Right ventricle myocardium superior (tissue), 1 donor: ENCODE measurements at regions of chr3 and their contacts with region 1.

Region 1: DNA sequence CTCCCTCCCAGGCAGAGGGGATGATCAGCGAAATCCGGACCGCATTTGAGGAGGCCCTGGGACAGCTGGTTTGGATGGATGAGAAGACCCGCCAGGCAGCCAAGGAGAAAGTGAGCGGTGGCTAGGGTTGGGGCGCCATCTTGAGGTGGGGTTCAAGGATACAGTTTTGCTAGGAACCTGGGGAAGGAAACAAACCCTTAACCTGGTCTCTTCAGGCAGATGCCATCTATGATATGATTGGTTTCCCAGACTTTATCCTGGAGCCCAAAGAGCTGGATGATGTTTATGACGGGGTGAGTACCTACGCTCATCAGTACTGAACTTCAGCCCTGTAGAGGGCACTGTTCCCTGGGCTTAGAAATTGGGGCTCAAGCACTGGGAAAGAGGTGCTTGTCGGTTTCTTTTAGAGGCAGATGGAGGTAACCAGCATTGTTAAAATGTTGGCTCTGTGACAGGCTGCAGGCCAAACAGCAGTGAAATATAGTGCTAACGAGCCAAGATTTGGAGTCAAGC is 9.6 kb upstream of the PSMD2 start:
- DNase-seq: no peak
- ATAC-seq: peak; percentile 55

Region 2: DNA sequence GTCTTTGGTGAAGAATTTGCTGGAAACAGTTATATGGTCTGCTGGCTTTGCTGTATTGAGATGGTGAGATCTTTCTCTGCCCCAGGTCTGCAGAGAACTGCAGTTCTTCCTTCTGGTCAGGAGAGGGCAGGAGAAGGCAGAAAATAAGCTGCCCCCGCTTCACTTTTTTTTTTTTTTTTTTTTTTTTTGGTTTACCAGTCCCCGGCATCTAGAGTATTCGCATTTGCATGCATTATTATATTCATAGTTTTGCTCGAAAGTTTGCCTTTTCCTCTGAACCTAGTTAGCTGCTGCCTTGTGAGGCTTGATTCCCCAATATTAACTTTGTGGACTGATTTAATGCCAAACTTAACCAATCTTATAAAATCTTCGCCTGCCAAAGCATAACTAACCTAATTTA is 394.2 kb before region 1 on chr3:
- intact Hi-C with region 1: loop called (anchors 10 kb)
- DNase-seq: no peak
- ATAC-seq: peak; percentile 72

Region 3: DNA sequence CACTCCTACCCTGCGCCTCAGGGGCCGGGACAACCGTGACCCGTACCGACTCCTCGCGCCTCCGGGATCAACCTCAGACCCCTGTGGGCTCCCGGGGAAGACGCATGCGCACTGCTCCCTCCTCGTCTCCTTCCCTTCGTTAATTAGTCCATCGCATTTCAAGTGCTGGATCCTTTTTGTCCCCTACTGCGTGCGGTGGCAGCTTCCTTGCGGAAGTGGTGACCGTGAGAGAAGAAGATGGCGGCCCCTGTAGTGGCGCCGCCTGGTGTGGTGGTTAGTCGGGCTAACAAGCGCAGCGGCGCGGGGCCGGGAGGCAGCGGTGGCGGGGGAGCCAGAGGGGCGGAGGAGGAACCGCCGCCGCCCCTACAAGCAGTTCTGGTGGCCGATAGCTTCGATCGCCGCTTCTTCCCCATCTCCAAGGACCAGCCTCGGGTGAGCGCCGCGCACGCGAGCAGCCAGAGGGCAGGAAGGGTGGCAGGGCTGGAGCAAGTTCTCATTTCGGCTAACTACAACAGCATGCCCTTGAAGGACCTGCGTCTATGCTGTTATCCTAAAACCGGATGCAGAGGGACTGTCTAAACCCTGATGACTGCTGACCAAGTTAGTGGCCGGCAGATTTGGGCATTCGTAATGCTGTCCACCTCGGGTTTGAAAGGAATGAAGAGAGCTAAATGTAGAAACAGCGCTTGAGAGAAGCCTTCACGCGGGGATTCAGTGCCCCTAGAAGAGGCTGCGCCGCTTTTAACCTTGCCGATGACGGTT is 154.2 kb before region 1 on chr3 and contains the start of gene EIF2B5:
- intact Hi-C with region 1: no loop called
- DNase-seq: peak; percentile 95
- ATAC-seq: peak; percentile 97
- total RNA-seq, gene EIF2B5: 31.4 TPM